Breast epithelium (tissue), 4 donors: ENCODE measurements at regions of chr1 and their contacts with region 1.

Region 1: DNA sequence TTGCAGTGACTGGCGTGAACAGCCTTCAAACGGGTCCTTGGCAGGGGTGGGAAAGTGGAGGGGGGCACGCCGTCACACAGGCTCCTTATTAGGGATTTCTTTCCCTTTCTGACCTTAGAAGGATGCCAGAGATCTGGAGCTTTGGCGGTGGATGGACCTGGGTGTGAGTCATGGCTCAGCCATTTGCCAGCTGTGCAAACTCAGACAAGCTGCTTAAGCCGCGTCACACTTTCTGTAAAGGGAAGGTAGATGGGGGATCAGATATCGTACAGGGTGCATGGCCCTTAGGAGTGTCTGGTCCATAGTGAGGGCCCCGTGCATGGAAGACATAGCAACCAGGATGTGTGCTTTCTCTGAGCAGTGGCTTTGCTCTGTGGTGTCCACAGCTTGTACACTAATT is 48.3 kb upstream of the C1orf174 start:
- DNase-seq: no peak
- H3K4me3 ChIP-seq: no peak overlapping the region
- H3K27ac ChIP-seq: no peak overlapping the region
- H3K4me1 ChIP-seq: no peaks in the 10 kb centered on the region
- H3K27me3 ChIP-seq: peaks cover 0 to 38% of the 10 kb centered on the region in 2 donors
- CTCF ChIP-seq: no peak
- POLR2A ChIP-seq: no peak

Region 2: GRCh38 chr1:3971981-3972380 is 23.6 kb after region 1 on chr1:
- intact Hi-C with region 1: loop called (anchors 1 kb)
- DNase-seq: no peak
- H3K4me3 ChIP-seq: no peak overlapping the region
- H3K27ac ChIP-seq: no peak overlapping the region
- H3K4me1 ChIP-seq: no peaks in the 10 kb centered on the region
- H3K27me3 ChIP-seq: peaks cover 0 to 22% of the 10 kb centered on the region in 2 donors
- CTCF ChIP-seq: no peak
- POLR2A ChIP-seq: no peak

Region 3: GRCh38 chr1:4203501-4203900 is 255.1 kb after region 1 on chr1:
- intact Hi-C with region 1: no loop called
- DNase-seq: no peak
- H3K4me3 ChIP-seq: no peak overlapping the region
- H3K27ac ChIP-seq: no peak overlapping the region
- H3K4me1 ChIP-seq: no peaks in the 10 kb centered on the region
- H3K27me3 ChIP-seq: no peaks in the 10 kb centered on the region
- CTCF ChIP-seq: no peak
- POLR2A ChIP-seq: no peak